Activated CD4-positive, alpha-beta T cell treated with anti-CD3 and anti-CD28 coated beads, Interleukin-2, amount 10 ng/mL, durations not matched to agents 7 days and 5 days (primary cell): ENCODE measurements at regions of chr22 and their contacts with region 1.

Region 1: GRCh38 chr22:39999144-39999757 is 4.5 kb downstream of the FAM83F start:
- DNase-seq: no peak
- H3K4me3 Mint-ChIP-seq: no peak overlapping the region
- H3K27ac Mint-ChIP-seq: no peak overlapping the region
- H3K4me1 Mint-ChIP-seq: peaks cover 2% of the 10 kb centered on the region
- H3K27me3 Mint-ChIP-seq: peaks cover 21% of the 10 kb centered on the region

Region 2: GRCh38 chr22:40009292-40009769 is 10.1 kb after region 1 on chr22:
- CTCF ChIA-PET with region 1: interaction called, 10 read pairs
- POLR2A ChIA-PET with region 1: no interaction called
- DNase-seq: no peak
- H3K4me3 Mint-ChIP-seq: no peak overlapping the region
- H3K27ac Mint-ChIP-seq: peak overlapping the region; percentile 75
- H3K4me1 Mint-ChIP-seq: peaks cover 17% of the 10 kb centered on the region
- H3K27me3 Mint-ChIP-seq: peaks cover 33% of the 10 kb centered on the region

Region 3: DNA sequence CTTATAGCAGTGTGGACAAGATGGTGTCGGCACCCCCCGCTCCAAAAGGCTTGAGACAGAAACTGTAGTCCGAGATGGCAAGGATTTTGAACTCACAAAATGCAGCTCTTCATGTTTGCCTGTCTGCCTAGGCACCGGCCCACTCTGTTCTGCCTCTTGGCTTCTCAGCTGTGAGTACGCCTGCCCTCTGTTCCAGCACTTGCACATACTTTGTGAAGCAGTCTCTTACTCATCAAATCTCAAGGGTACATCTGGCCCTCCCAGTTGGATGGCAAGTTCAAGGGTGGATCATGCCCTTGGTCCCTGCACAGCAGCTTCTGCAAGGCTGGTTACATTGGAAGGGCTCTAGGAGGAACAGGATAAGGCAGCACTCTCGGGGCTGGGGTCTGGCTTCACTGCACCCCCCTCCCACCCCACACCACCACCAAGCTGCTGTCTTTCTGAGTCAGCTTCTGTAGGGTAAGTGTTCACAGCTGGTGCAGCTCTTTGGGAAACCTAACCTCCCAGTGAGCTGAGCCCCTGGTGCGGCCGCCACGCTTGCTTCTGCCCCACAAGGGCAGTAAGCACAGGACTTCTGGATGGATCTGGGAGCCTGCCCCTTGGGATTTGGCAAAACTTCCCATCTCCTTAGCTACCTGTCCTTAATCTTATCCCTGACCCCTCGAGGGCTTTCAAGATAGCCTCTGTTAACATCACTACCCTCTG is 32.7 kb after region 1 on chr22:
- CTCF ChIA-PET with region 1: no interaction called
- POLR2A ChIA-PET with region 1: no interaction called
- DNase-seq: no peak
- H3K4me3 Mint-ChIP-seq: no peak overlapping the region
- H3K27ac Mint-ChIP-seq: no peak overlapping the region
- H3K4me1 Mint-ChIP-seq: peaks cover 11% of the 10 kb centered on the region
- H3K27me3 Mint-ChIP-seq: no peaks in the 10 kb centered on the region